RWPE1 (cell line): ENCODE measurements at regions of chr19 and their contacts with region 1.

Region 1: DNA sequence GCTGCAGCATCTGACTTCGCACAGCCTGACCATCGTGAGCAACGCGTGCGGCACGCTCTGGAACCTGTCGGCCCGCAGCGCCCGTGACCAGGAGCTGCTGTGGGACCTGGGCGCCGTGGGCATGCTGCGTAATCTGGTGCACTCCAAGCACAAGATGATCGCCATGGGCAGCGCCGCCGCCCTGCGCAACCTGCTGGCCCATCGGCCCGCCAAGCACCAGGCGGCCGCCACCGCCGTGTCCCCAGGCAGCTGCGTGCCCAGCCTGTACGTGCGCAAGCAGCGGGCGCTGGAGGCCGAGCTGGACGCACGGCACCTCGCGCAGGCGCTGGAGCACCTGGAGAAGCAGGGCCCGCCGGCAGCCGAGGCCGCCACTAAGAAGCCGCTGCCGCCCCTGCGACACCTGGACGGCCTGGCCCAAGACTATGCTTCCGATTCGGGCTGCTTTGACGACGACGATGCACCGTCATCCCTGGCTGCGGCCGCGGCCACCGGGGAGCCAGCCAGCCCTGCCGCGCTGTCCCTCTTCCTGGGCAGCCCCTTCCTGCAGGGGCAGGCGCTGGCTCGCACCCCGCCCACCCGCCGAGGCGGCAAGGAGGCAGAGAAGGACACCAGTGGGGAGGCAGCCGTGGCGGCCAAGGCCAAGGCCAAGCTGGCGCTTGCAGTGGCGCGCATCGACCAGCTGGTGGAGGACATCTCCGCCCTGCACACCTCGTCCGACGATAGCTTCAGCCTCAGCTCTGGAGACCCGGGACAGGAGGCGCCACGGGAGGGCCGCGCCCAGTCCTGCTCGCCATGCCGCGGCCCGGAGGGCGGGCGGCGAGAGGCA is 13.6 kb downstream of the C19orf25 start:
- DNase-seq: peak; percentile 61
- H3K27ac ChIP-seq: peak overlapping the region; percentile 52
- CTCF ChIP-seq: peak; percentile 78

Region 2: DNA sequence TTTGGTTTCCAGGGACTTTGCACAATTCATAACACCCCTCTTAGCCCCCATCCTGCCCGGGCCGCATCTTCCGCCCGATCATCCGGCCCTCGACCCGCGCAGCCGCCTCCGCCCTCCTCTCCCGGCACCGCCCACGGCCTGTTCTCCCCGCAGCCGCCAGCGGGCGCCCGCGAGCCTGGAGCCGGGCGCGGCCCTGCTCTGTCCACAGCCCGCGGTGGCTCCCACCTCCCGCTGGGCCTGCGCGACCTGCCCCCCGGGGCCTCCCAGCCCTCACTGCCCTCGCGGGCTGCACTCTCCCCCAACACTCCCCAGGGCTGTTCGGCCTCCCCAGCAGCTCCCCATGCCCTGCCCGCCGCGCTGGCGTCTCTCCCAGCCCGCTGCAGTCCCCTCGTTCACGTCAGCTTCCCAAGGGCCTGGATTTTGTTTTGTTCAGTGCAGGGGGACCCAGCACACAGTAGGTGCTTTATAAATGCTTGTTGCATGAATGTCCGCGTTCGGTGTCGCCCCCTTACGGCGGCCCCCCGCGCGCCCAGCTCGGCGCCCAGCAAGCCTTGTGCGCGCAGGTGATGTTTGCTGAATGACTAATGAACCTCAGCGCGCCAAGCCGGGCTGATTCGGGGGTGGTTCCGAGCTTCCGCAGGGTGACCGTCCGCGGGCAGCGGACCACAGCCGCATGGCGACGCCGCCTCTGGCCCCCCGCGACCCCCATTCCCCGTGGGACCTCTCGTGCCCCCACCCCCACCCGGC is 20.0 kb before region 1 on chr19:
- CTCF ChIA-PET with region 1: interaction called, 11 read pairs
- POLR2A ChIA-PET with region 1: no interaction called
- DNase-seq: peak; percentile 71
- H3K27ac ChIP-seq: peak overlapping the region; percentile 82
- CTCF ChIP-seq: peak; percentile 98